ENCODE measurements at regions of chr11 and their contacts with region 1.

Region 1: DNA sequence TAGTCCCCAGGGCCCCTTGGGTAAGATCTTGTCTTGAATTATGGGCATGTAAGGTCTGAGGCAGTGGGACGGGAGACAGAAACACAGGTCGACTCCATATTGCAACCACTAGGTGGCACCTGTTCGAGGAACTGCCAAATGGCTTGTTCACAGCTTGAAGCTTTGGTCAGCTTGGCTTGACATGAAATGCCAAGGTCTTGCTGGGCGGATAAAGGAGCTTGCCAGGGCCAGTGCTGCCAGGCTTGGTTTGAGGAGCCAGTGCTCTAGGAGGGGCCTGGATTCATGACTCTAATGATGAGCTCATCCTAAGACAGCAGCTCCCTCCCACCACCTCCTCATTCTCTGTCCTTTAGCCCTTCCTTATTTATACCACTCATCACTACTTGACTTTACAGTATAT is 11.9 kb upstream of the NRIP3 start:
- DNase-seq: peak; percentile 57
- H3K4me3 Mint-ChIP-seq: no peak overlapping the region
- H3K27ac Mint-ChIP-seq: no peak overlapping the region
- H3K4me1 Mint-ChIP-seq: no peaks in the 10 kb centered on the region
- H3K27me3 Mint-ChIP-seq: peaks cover 48% of the 10 kb centered on the region
- CTCF ChIP-seq: peak; percentile 67

Region 2: GRCh38 chr11:9120664-9121485 is 105.2 kb after region 1 on chr11:
- CTCF ChIA-PET with region 1: no interaction called
- intact Hi-C with region 1: loop called (anchors 5 kb)
- DNase-seq: no peak
- H3K4me3 Mint-ChIP-seq: no peak overlapping the region
- H3K27ac Mint-ChIP-seq: no peak overlapping the region
- H3K4me1 Mint-ChIP-seq: no peaks in the 10 kb centered on the region
- H3K27me3 Mint-ChIP-seq: no peaks in the 10 kb centered on the region
- CTCF ChIP-seq: peak; percentile 18

Region 3: GRCh38 chr11:9137293-9138132 is 121.8 kb after region 1 on chr11:
- CTCF ChIA-PET with region 1: interaction called, 62 read pairs
- intact Hi-C with region 1: loop called (anchors 1 kb)
- DNase-seq: peak; percentile 81
- H3K4me3 Mint-ChIP-seq: no peak overlapping the region
- H3K27ac Mint-ChIP-seq: peak overlapping the region; percentile 8
- H3K4me1 Mint-ChIP-seq: peaks cover 34% of the 10 kb centered on the region
- H3K27me3 Mint-ChIP-seq: no peaks in the 10 kb centered on the region
- CTCF ChIP-seq: peak; percentile 75

Region 4: GRCh38 chr11:9506489-9507276 is 491.0 kb after region 1 on chr11:
- CTCF ChIA-PET with region 1: interaction called, 13 read pairs
- intact Hi-C with region 1: loop called (anchors 5 kb)
- DNase-seq: peak; percentile 81
- H3K4me3 Mint-ChIP-seq: no peak overlapping the region
- H3K27ac Mint-ChIP-seq: peak overlapping the region; percentile 47
- H3K4me1 Mint-ChIP-seq: peaks cover 23% of the 10 kb centered on the region
- H3K27me3 Mint-ChIP-seq: no peaks in the 10 kb centered on the region
- CTCF ChIP-seq: peak; percentile 56